ENCODE measurements at regions of chr9 and their contacts with region 1.

Region 1: DNA sequence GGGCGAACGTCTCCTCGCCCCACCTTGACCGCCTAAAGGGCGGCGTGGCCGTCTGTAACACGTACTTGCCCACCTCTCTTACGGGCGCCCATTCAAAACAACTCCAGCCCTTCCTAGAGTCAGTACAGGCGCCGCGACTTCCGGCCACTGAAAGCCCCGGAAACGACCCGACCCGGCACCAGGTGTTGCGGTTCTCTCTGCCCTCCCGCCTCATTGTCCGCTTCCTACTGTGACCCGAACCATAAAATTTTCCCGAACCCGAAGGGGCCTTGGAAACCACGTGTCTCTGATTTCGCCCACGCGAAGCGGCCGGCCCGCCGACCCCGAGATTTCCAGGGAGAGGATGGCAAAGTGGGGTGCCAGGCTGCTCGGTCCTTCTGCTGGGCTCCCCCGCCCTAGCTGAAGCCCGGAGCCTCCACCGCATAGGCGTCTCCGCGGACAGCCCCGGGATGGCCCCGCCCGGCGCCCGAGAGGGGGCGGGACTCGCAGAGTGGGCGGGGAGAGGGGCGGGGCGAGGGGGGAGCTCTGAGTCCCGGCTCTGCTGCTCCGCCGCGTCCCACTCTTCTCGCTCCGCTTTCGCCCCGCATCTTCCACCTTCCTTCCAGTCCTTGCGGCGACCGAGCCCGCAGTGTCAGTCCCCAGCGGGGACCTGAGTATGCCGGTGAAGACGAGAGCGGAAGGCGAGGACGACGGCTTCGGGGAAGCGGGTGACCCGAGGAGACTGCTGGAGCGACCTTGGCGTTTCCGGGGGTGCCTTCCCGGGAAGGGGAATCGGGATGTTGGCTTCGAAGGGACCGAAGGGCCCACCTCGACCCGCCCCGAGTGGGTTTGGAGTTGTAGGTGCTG is 684 bp upstream of the PTGES2 start:
- DNase-seq: peak; percentile 90
- ATAC-seq: peak; percentile 84
- H3K4me3 Mint-ChIP-seq: peak overlapping the region; percentile 96
- H3K27ac Mint-ChIP-seq: peak overlapping the region; percentile 96
- H3K4me1 Mint-ChIP-seq: peaks cover 29% of the 10 kb centered on the region
- H3K27me3 Mint-ChIP-seq: peaks cover 2% of the 10 kb centered on the region

Region 2: GRCh38 chr9:127770905-127771569 is 357.2 kb before region 1 on chr9:
- CTCF ChIA-PET with region 1: no interaction called
- POLR2A ChIA-PET with region 1: no interaction called
- intact Hi-C with region 1: loop called in 1 of 2 experiments (anchors 1 kb)
- DNase-seq: peak; percentile 99
- ATAC-seq: peak; percentile 95
- H3K4me3 Mint-ChIP-seq: peak overlapping the region; percentile 80
- H3K27ac Mint-ChIP-seq: peak overlapping the region; percentile 80
- H3K4me1 Mint-ChIP-seq: peaks cover 59% of the 10 kb centered on the region
- H3K27me3 Mint-ChIP-seq: no peaks in the 10 kb centered on the region

Region 3: GRCh38 chr9:127980706-127981558 is 147.3 kb before region 1 on chr9 and contains the start of gene EEIG1:
- CTCF ChIA-PET with region 1: interaction called, 4 read pairs
- POLR2A ChIA-PET with region 1: no interaction called
- intact Hi-C with region 1: loop called in 1 of 2 experiments (anchors 1 kb)
- DNase-seq: peak; percentile 99
- ATAC-seq: peak; percentile 87
- H3K4me3 Mint-ChIP-seq: peak within 1 kb of the TSS; percentile 97
- H3K27ac Mint-ChIP-seq: peak within 1 kb of the TSS; percentile 98
- H3K4me1 Mint-ChIP-seq: peaks cover 47% of the 10 kb centered on the region
- H3K27me3 Mint-ChIP-seq: no peaks in the 10 kb centered on the region
- total RNA-seq, gene EEIG1: 56.2 to 58.4 TPM

Region 4: GRCh38 chr9:128159784-128160602 is 31.8 kb after region 1 on chr9 and contains the start of gene BBLN:
- CTCF ChIA-PET with region 1: interaction called, 4 read pairs
- POLR2A ChIA-PET with region 1: interaction called, 6 read pairs
- intact Hi-C with region 1: loop called (anchors 1 to 2 kb)
- DNase-seq: peak; percentile 98
- ATAC-seq: peak; percentile 91
- H3K4me3 Mint-ChIP-seq: peak within 1 kb of the TSS; percentile 74
- H3K27ac Mint-ChIP-seq: peak within 1 kb of the TSS; percentile 90
- H3K4me1 Mint-ChIP-seq: peaks cover 19% of the 10 kb centered on the region
- H3K27me3 Mint-ChIP-seq: no peaks in the 10 kb centered on the region
- total RNA-seq, gene BBLN: 64.4 to 68.5 TPM

Region 5: GRCh38 chr9:128249908-128250838 is 122.0 kb after region 1 on chr9:
- CTCF ChIA-PET with region 1: no interaction called
- POLR2A ChIA-PET with region 1: no interaction called
- intact Hi-C with region 1: loop called in 1 of 2 experiments (anchors 1 kb)
- DNase-seq: peak; percentile 99
- ATAC-seq: peak; percentile 98
- H3K4me3 Mint-ChIP-seq: peak overlapping the region; percentile 78
- H3K27ac Mint-ChIP-seq: peak overlapping the region; percentile 42
- H3K4me1 Mint-ChIP-seq: peaks cover 7% of the 10 kb centered on the region
- H3K27me3 Mint-ChIP-seq: peaks cover 10% of the 10 kb centered on the region

Region 6: DNA sequence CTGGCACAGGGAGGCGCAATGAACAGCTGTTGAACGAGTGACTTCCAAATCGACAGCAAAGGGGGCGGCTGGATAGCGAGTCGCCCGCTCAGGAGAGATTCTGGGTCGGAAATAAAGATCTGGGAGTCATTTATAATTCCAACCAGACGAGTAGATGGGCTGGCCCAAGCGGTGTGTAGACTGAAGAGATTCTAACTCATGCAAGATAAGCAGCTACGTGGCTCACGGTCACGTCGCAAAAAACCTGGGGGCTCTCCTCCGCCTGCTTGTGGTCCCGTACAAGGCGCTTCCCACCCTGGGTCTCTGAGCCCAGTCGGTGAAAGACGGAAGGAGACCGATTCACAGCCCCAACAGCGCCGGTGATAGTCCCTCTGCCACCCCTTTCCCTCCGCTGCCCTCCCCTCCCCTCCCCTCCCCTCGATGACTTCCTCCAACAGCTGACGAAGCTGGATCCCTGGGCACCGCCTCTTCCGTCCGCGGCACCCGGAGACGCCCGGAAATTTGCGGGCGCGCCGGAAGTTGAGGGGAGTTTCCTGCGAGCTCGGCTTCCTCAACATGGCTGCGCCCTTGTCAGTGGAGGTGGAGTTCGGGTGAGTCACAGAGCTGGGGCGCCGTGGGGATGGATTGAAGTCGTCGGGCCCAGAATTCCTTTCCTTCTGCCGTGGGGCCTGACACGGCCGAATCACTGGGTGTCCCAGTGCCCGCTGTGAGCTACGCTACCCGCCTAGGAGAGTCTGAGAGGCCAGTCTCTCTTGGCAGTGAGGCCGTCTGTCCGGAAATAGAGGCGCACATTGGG is 242.8 kb after region 1 on chr9 and contains the start of gene URM1:
- CTCF ChIA-PET with region 1: interaction called, 3 read pairs
- POLR2A ChIA-PET with region 1: no interaction called
- intact Hi-C with region 1: loop called in 1 of 2 experiments (anchors 1 kb)
- DNase-seq: peak; percentile 98
- ATAC-seq: peak; percentile 98
- H3K4me3 Mint-ChIP-seq: peak within 1 kb of the TSS; percentile 87
- H3K27ac Mint-ChIP-seq: peak within 1 kb of the TSS; percentile 89
- H3K4me1 Mint-ChIP-seq: peaks cover 27% of the 10 kb centered on the region
- H3K27me3 Mint-ChIP-seq: no peaks in the 10 kb centered on the region
- total RNA-seq, gene URM1: 39.9 to 56.1 TPM